ENCODE measurements at regions of chr19 and their contacts with region 1.

Region 1: DNA sequence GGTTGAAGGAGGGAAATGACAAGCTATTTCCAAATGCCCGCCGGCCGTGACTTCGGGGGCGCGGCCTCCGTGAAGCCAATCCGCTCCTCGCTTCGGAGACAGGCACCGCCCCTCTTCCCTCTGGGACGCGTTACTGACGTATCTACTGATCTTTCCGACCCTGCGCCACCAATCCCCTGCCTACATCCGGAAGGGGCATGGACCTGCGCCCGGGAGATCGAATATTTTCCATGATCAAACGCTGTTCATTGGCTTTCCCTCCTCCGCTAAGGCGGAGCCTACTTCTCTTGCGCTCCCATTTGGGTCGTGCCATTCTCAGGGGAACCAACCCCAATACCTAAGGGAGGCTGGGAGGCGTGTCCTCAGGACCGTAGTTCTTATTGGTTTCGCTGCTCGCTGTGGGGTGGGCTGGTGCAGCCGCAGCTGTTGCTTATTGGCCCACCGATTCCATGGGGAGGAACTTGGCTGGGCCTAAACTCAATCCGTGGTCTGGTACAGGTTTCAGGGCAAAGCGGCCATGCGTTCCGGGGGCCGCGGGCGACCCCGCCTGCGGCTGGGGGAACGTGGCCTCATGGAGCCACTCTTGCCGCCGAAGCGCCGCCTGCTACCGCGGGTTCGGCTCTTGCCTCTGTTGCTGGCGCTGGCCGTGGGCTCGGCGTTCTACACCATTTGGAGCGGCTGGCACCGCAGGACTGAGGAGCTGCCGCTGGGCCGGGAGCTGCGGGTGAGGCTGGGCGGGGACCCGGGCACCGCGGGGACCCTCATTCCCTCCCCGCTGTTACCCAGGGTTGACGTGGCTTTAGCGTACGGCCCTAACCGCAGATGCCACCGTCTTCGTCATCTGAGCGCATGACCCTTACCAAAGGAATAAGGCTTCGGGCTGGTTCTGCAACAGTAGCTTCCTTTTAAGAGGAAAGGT is at the start of gene QPCTL:
- DNase-seq: peak; percentile 91 to 99
- H3K4me3 ChIP-seq: peak within 1 kb of the TSS; percentile 73 to 89 (median 84)
- H3K27ac ChIP-seq: peak within 1 kb of the TSS; percentile 79
- H3K4me1 ChIP-seq: no peaks in the 10 kb centered on the region; a peak in 1 of 7 replicates
- H3K27me3 ChIP-seq: no peaks in the 10 kb centered on the region
- CTCF ChIP-seq: no peak
- EP300 ChIP-seq: no peak
- POLR2A ChIP-seq: peak; percentile 71 to 80; a peak in 2 of 3 replicates
- RAD21 ChIP-seq: no peak
- total RNA-seq, gene QPCTL: 25.2 and 27.1 TPM in 2 replicates

Region 2: GRCh38 chr19:45670670-45671453 is 21.6 kb before region 1 on chr19:
- CTCF ChIA-PET with region 1: interaction called, 98 read pairs
- POLR2A ChIA-PET with region 1: interaction called, 32 read pairs
- DNase-seq: peak; percentile 93 to 100
- H3K4me3 ChIP-seq: peak overlapping the region; percentile 37 to 69 (median 50)
- H3K27ac ChIP-seq: no peak overlapping the region
- H3K4me1 ChIP-seq: peaks cover 9 to 14% (median 10%) of the 10 kb centered on the region in 4 experiments
- H3K27me3 ChIP-seq: peaks cover 18 to 31% (median 27%) of the 10 kb centered on the region in 4 experiments
- CTCF ChIP-seq: no peak
- EP300 ChIP-seq: no peak
- POLR2A ChIP-seq: no peak
- RAD21 ChIP-seq: no peak

Region 3: DNA sequence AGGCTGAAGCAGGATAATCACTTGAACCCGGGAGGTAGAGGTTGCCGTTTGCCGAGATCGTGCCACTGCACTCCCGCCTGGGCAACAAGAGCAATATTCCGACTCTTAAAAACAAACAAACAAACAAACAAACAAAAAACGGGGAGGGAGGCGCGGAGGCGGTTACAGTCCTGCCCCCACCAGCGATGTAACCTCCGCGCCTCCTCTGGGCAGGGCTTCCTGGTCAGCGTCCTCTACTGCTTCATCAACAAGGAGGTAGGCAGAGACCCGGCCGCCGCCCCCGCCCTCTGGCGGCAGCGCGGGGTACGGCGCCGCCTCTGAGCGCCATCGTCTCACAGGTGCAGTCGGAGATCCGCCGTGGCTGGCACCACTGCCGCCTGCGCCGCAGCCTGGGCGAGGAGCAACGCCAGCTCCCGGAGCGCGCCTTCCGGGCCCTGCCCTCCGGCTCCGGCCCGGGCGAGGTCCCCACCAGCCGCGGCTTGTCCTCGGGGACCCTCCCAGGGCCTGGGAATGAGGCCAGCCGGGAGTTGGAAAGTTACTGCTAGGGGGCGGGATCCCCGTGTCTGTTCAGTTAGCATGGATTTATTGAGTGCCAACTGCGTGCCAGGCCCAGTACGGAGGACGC is 10.9 kb before region 1 on chr19:
- CTCF ChIA-PET with region 1: interaction called, 98 read pairs
- POLR2A ChIA-PET with region 1: interaction called, 34 read pairs
- DNase-seq: peak in 1 of 2 experiments; percentile 95
- H3K4me3 ChIP-seq: peak overlapping the region in 3 of 4 experiments; percentile 11 to 57 (median 33); a peak in 4 of 8 replicates
- H3K27ac ChIP-seq: no peak overlapping the region
- H3K4me1 ChIP-seq: peaks cover 0 to 9% (median 5%) of the 10 kb centered on the region in 4 experiments; a peak in 5 of 7 replicates
- H3K27me3 ChIP-seq: peaks cover 0 to 8% (median 0%) of the 10 kb centered on the region in 4 experiments; a peak in 4 of 7 replicates
- CTCF ChIP-seq: peak; percentile 81 to 96 (median 91)
- EP300 ChIP-seq: peak in 1 of 2 experiments; percentile 70; a peak in 1 of 3 replicates
- POLR2A ChIP-seq: no peak
- RAD21 ChIP-seq: peak; percentile 64 to 75

Region 4: GRCh38 chr19:45705115-45705514 is 12.7 kb after region 1 on chr19:
- CTCF ChIA-PET with region 1: interaction called, 13 read pairs
- POLR2A ChIA-PET with region 1: interaction called, 47 read pairs
- DNase-seq: no peak
- H3K4me3 ChIP-seq: no peak overlapping the region
- H3K27ac ChIP-seq: no peak overlapping the region
- H3K4me1 ChIP-seq: no peaks in the 10 kb centered on the region
- H3K27me3 ChIP-seq: no peaks in the 10 kb centered on the region
- CTCF ChIP-seq: no peak
- EP300 ChIP-seq: no peak
- POLR2A ChIP-seq: no peak
- RAD21 ChIP-seq: no peak

Region 5: DNA sequence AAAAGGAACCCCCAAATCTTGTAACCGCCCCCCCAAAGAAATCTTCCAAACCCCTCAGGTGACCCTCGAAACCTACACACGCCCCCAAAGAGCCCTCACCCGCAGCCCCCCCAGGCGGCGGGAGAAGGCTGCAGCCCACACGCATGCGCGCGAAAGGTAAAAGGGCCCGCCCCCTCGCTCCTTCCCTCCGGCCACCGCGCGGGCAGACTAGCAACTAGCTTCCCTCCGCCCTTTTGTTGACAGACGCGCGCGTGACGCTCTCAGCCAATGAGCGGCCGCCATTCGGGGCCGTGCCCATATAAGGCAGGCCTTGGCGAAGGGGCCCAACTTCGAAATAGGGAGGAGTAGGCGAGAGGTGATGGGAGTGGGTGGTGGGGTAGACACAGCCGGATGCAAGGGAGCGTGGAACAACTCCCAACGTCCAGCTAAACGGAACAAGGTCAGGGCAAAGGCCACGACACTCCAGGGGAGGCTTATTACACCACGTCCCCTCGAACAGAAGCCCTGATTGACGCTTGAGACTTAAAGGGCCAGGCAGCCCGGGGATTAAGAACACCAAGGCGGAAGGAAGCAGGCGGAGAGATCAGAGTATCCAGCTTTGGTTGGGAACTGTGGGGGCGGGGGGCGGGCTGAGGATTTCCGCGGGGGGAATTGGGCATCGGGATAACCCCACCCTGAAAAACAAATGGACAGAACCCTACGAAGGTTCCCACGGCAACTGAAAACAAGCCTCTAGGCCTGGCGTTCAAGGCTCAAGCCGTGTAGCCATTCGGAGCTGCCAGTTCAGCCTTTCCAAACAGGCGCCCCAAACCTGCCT is 24.9 kb after region 1 on chr19:
- CTCF ChIA-PET with region 1: interaction called, 11 read pairs
- POLR2A ChIA-PET with region 1: interaction called, 74 read pairs
- DNase-seq: peak; percentile 97 to 98
- H3K4me3 ChIP-seq: peak overlapping the region; percentile 83 to 92 (median 88)
- H3K27ac ChIP-seq: peak overlapping the region; percentile 96
- H3K4me1 ChIP-seq: peaks cover 0 to 9% (median 8%) of the 10 kb centered on the region in 4 experiments; a peak in 6 of 7 replicates
- H3K27me3 ChIP-seq: no peaks in the 10 kb centered on the region
- CTCF ChIP-seq: no peak
- EP300 ChIP-seq: peak in 1 of 2 experiments; percentile 56; a peak in 1 of 3 replicates
- POLR2A ChIP-seq: peak in 1 of 2 experiments; percentile 84; a peak in 2 of 3 replicates
- RAD21 ChIP-seq: no peak

Measured in H1 (cell line).